ENCODE measurements at regions of chr7 and their contacts with region 1.

Region 1: DNA sequence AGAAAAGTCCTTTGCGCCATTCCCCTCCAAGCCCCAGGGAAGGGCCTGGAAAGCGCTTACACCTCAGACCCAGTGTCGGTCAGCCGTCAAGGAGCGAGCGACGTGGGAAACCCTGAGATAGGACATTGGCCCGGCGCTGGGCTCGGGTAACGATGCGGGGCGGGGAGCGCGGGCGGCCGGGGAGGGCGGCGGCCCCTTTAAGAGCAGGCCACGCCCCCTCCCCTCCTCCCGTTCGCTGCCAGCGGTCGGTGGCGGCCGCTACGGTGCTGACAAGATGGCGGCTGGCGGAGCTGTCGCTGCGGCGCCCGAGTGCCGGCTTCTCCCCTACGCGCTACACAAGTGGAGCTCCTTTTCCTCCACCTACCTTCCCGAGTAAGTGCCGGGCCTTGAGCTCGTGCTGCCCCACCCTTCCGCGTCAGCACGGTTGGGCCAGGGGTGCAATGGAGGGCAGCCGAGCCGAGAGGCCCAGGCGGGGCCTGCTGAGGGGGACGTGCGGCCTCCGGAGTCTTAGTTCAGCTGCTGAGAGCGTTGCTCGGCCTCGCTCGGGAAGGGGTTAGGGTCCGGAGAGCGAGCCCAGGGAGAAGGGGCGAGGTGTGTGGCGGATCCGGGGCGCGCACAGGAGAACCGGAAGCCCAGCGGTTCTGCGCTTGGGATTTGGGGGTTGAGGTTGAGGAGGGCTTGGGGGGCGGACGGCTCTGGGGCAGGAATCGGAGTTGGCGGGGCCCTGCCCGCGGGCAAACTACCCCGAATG is at the start of gene MKLN1:
- DNase-seq: peak; percentile 92
- H3K4me3 Mint-ChIP-seq: peak within 1 kb of the TSS; percentile 90
- H3K27ac Mint-ChIP-seq: peak within 1 kb of the TSS; percentile 95
- H3K4me1 Mint-ChIP-seq: peaks cover 59% of the 10 kb centered on the region
- H3K27me3 Mint-ChIP-seq: no peaks in the 10 kb centered on the region
- total RNA-seq, gene MKLN1: 33.0 to 33.8 TPM

Region 2: GRCh38 chr7:131188367-131189339 is 139.1 kb before region 1 on chr7:
- CTCF ChIA-PET with region 1: no interaction called
- POLR2A ChIA-PET with region 1: interaction called, 7 read pairs
- intact Hi-C with region 1: loop called (anchors 1 kb)
- DNase-seq: peak; percentile 68
- H3K4me3 Mint-ChIP-seq: peak overlapping the region; percentile 45
- H3K27ac Mint-ChIP-seq: peak overlapping the region; percentile 90
- H3K4me1 Mint-ChIP-seq: peaks cover 54% of the 10 kb centered on the region
- H3K27me3 Mint-ChIP-seq: no peaks in the 10 kb centered on the region

Region 3: GRCh38 chr7:131231381-131232220 is 96.2 kb before region 1 on chr7:
- CTCF ChIA-PET with region 1: interaction called, 3 read pairs
- POLR2A ChIA-PET with region 1: interaction called, 3 read pairs
- intact Hi-C with region 1: loop called (anchors 1 kb)
- DNase-seq: peak; percentile 81
- H3K4me3 Mint-ChIP-seq: peak overlapping the region; percentile 64
- H3K27ac Mint-ChIP-seq: peak overlapping the region; percentile 88
- H3K4me1 Mint-ChIP-seq: peaks cover 48% of the 10 kb centered on the region
- H3K27me3 Mint-ChIP-seq: no peaks in the 10 kb centered on the region

Region 4: DNA sequence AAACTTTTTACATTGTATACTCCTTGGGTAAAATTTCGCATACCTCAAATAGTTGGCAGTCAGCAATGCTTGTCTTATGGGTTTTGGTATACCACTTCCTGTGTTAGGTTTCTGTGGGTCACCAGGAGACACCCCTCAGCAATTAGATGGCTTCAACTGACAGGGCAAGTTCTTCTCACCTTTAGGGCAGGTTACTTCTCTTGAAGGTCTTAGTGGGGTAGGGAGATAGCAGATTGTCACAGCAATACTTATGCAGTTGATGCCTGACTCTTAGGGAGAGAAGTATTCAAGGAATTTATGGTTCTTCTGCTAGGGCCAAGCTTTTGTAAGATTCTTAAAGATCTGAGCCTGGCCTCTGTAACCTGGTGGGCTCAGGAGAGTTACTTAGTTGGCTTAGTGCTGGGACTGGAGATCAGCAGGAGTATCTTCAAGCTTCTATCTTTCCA is 42.7 kb after region 1 on chr7:
- CTCF ChIA-PET with region 1: no interaction called
- POLR2A ChIA-PET with region 1: no interaction called
- intact Hi-C with region 1: loop called (anchors 2 kb)
- DNase-seq: peak; percentile 40
- H3K4me3 Mint-ChIP-seq: no peak overlapping the region
- H3K27ac Mint-ChIP-seq: no peak overlapping the region
- H3K4me1 Mint-ChIP-seq: peaks cover 69% of the 10 kb centered on the region
- H3K27me3 Mint-ChIP-seq: no peaks in the 10 kb centered on the region

Region 5: DNA sequence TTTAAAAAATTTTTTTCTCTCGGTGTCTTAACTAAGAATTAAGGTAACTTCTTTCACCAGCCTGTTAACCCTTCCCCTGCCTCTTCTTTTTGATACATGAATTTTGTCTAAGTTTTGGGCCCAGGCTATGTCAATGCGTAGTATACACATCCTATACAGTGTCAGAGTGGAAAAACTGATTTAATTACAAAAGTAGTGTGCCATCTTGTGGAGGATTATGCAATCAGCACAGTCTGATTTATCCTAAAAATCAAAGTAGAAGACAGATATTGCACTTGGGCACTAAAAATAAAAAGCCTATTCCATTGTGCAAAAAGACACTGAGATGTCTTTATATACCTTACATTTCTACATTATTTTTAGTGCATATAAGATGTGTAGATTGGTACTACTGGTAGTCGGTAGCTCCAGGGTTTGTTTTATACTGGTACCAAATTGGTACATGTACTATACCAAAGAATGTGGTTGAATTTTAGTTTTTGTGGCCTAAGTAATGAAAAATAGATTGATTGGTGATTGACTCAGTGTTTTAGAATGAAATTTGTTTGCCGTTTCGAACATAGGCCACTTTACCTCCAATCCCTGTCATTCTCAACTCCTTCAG is 96.5 kb after region 1 on chr7:
- CTCF ChIA-PET with region 1: interaction called, 3 read pairs
- POLR2A ChIA-PET with region 1: no interaction called
- intact Hi-C with region 1: loop called (anchors 5 kb)
- DNase-seq: no peak
- H3K4me3 Mint-ChIP-seq: no peak overlapping the region
- H3K27ac Mint-ChIP-seq: no peak overlapping the region
- H3K4me1 Mint-ChIP-seq: peaks cover 6% of the 10 kb centered on the region
- H3K27me3 Mint-ChIP-seq: no peaks in the 10 kb centered on the region

Region 6: DNA sequence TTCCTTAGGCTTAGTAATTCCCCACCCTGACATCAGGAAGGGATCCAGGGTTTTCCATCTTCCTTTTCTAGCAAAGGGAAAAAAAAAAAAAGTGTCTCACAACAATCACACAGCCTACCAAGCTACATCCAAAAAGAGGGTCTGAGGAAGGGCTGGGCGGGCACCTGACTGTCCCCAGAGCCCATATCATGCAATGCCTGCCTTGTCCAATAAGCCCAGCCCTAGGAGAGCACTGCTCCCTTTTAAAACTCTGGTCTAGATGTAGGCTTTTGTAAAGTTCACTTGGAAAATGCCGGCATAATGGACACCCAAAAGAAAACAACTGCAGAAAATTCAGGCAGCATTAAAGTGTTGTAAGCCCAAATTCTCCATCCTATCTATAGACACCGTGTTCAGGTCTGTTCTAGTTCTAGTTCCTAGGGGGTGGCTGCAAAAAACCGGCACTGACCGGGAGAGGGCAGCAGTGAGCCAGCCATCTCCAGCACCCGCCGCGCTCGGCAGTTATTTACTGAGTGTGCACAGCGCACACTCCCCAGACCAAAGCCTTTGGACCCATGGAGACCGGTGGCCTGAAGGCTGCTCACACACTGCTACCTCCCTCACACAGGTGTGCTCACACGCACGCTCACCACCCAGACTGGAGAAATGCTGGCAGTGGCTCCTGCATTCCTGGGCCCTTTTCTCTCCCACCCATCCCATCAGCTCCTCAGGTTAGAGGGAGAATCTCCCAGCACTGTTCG is 180.0 kb after region 1 on chr7:
- CTCF ChIA-PET with region 1: no interaction called
- POLR2A ChIA-PET with region 1: no interaction called
- intact Hi-C with region 1: loop called (anchors 5 kb)
- DNase-seq: peak; percentile 88
- H3K4me3 Mint-ChIP-seq: peak overlapping the region; percentile 20
- H3K27ac Mint-ChIP-seq: no peak overlapping the region
- H3K4me1 Mint-ChIP-seq: peaks cover 18% of the 10 kb centered on the region
- H3K27me3 Mint-ChIP-seq: peaks cover 9% of the 10 kb centered on the region

Measured in activated CD4-positive, alpha-beta memory T cell treated with anti-CD3 and anti-CD28 coated beads for 36 hours (primary cell).